Thyroid gland (tissue), 4 donors: ENCODE measurements at regions of chr7 and their contacts with region 1.

Region 1: GRCh38 chr7:28298870-28299518 is 113.3 kb upstream of the CREB5 start:
- DNase-seq: peak; percentile 29 to 47
- H3K4me3 ChIP-seq: no peak overlapping the region
- H3K27ac ChIP-seq: no peak overlapping the region
- H3K4me1 ChIP-seq: peaks cover 0 to 9% of the 10 kb centered on the region in 2 donors
- H3K27me3 ChIP-seq: no peaks in the 10 kb centered on the region
- CTCF ChIP-seq: peak in 4 of 6 experiments; percentile 8 to 63 (median 47)
- POLR2A ChIP-seq: no peak

Region 2: DNA sequence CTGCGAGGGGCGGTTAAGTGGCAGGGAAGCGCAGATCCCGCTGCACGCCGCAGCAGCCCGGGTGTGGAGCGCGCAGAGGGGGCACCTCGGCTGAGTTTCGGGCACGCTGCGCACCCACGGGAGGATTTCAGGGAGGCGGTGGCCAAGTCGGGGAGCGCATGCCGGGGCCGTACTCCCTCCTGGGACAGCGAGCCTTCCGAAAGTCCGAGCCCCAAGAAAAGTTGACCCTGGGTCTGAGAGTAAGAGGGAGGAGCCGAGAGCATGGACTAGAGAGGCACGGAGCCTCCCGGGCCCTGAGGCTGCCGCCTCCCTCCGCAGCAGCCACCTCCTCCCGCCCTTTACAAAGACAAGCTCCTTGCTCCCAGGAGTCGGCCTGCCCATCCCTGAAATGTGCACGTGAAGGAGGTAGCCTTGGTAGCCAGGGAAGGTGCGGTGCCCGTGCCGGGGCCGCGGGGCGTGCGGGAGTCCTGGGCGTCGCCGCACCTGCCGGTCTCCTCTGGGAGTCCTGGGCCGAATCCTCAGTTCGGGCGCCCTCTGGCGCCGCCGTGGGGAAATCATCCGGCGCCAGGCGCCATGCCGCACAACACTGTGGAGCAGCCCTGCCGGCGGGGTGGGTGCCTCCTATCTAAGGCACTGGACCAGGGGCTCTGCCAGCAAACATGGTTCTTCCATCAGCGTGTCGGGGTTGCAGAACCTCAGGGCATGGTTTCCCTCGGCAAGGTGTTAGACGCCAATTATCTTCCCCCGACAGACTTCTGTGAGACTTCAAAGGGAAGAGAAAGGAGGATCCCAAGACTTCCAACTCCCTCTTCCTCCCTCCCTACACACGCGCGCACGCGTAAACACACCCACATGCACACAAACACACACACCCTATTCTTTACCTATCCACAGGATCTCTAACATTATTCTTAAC is 555.1 kb after region 1 on chr7:
- intact Hi-C with region 1: loop called (anchors 10 kb)
- DNase-seq: peak; percentile 68 to 74
- H3K4me3 ChIP-seq: peak overlapping the region in 2 of 3 donors; percentile 6 to 23
- H3K27ac ChIP-seq: no peak overlapping the region
- H3K4me1 ChIP-seq: peaks cover 0 to 6% of the 10 kb centered on the region in 2 donors
- H3K27me3 ChIP-seq: peaks cover 2% of the 10 kb centered on the region
- CTCF ChIP-seq: peak; percentile 71 to 91 (median 76)
- POLR2A ChIP-seq: no peak